ENCODE measurements at regions of chr20 and their contacts with region 1.

Region 1: DNA sequence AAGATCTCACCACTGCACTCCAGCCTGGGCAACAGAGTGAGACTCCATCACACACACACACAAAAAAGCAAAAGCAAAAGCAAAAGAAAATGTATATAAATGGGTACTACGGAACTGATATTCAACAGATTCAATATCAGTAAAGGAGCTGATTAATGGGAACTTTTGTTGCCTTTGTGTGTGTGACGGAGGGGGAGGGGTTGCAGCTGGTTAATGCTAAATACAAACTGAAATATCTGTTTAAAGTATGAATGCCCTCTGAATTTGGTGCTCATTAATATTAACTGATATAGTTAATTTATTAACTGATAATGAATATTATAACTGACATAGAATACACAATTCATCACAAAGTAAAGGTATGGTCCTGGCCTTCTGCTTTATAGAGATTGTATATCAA is 8.4 kb downstream of the NCOA6 start:
- DNase-seq: no peak
- ATAC-seq: no peak
- H3K4me3 ChIP-seq: no peak overlapping the region
- H3K27ac ChIP-seq: no peak overlapping the region
- H3K4me1 ChIP-seq: peaks cover 0 to 5% of the 10 kb centered on the region in 2 experiments; a peak in 4 of 5 replicates
- H3K27me3 ChIP-seq: no peaks in the 10 kb centered on the region
- CTCF ChIP-seq: no peak
- EP300 ChIP-seq: no peak
- POLR2A ChIP-seq: no peak
- RAD21 ChIP-seq: no peak

Region 2: GRCh38 chr20:34768096-34768495 is 49.0 kb before region 1 on chr20:
- CTCF ChIA-PET with region 1: no interaction called
- POLR2A ChIA-PET with region 1: no interaction called
- in situ Hi-C with region 1: no loop called
- intact Hi-C with region 1: no loop called
- DNase-seq: no peak
- ATAC-seq: no peak
- H3K4me3 ChIP-seq: no peak overlapping the region
- H3K27ac ChIP-seq: no peak overlapping the region
- H3K4me1 ChIP-seq: peaks cover 0 to 3% of the 10 kb centered on the region in 2 experiments; a peak in 2 of 5 replicates
- H3K27me3 ChIP-seq: no peaks in the 10 kb centered on the region
- CTCF ChIP-seq: no peak
- EP300 ChIP-seq: no peak
- POLR2A ChIP-seq: no peak
- RAD21 ChIP-seq: no peak

Region 3: DNA sequence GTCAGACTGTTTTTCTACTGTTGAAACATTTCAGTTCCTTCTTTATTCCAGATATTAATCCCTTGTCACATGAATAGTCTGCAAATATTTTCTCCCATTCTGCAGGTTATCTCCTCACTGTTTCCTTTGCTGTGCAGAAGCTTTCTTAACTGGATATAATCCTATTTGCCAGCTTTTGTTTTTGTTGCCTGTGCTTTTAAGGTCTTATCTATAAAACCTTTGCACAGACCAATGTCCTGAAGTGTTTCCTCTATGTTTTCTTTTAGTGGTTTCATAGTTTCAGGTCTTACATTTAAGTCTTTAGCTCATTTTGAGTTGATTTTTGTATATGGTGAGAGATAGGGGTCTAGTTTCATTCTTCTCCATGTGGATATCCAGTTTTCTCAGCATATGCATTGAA is 10.8 kb before region 1 on chr20:
- CTCF ChIA-PET with region 1: no interaction called
- POLR2A ChIA-PET with region 1: interaction called, 10 read pairs
- in situ Hi-C with region 1: no loop called
- intact Hi-C with region 1: no loop called
- DNase-seq: no peak
- ATAC-seq: peak; percentile 22; the same call in 1 of the 3 replicates
- H3K4me3 ChIP-seq: no peak overlapping the region
- H3K27ac ChIP-seq: no peak overlapping the region
- H3K4me1 ChIP-seq: peaks cover 0 to 6% of the 10 kb centered on the region in 2 experiments; a peak in 2 of 5 replicates
- H3K27me3 ChIP-seq: no peaks in the 10 kb centered on the region
- CTCF ChIP-seq: no peak
- EP300 ChIP-seq: no peak
- POLR2A ChIP-seq: no peak
- RAD21 ChIP-seq: no peak

Region 4: GRCh38 chr20:34922654-34923424 is 105.8 kb after region 1 on chr20:
- CTCF ChIA-PET with region 1: no interaction called
- POLR2A ChIA-PET with region 1: no interaction called
- in situ Hi-C with region 1: no loop called
- intact Hi-C with region 1: no loop called
- DNase-seq: no peak
- ATAC-seq: no peak
- H3K4me3 ChIP-seq: no peak overlapping the region
- H3K27ac ChIP-seq: no peak overlapping the region
- H3K4me1 ChIP-seq: no peaks in the 10 kb centered on the region; a peak in 1 of 5 replicates
- H3K27me3 ChIP-seq: no peaks in the 10 kb centered on the region
- CTCF ChIP-seq: no peak
- EP300 ChIP-seq: no peak
- POLR2A ChIP-seq: no peak
- RAD21 ChIP-seq: no peak